ENCODE measurements at regions of chr11 and their contacts with region 1.

Region 1: DNA sequence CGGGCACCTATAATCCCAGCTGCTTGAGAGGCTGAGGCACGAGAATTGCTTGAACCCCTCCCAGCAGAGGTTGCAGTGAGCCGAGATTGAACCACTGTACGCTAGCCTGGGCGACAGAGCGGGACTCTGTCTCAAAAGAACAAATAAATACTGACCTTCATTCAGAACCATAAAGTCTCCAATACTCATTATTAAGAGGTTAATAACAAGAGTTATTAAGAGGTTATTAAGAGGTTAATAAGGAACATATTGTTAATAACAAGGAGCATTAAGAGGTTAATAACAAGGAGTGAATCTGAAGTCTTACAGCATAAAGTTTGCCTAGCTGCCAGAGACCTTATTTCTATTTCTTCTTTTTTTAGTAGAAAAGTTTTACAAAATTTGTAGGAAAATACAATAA is 7.6 kb downstream of the CELF1 start:
- DNase-seq: no peak
- ATAC-seq: no peak
- H3K4me3 ChIP-seq: no peak overlapping the region
- H3K27ac ChIP-seq: no peak overlapping the region
- H3K4me1 ChIP-seq: peaks cover 0 to 3% of the 10 kb centered on the region in 2 donors
- H3K27me3 ChIP-seq: no peaks in the 10 kb centered on the region

Region 2: DNA sequence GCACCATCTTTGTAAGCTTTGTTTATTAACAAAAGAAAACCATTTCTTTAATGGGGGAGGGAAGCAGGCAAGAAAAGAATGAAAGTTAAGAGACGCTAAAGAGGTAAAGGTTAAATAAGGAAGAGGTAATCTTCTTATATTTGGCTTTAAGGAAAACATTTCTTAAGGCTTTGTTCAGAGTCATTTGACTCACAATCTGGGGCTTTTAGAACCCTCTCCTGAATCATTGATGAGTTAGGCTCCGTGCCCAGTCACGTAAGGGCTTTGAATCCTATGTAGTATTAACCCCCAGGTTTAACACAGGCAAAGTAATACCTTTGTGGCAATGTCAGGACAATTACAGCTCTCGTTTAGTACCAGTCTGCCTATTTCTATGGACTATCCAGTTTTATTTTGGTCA is 249.3 kb before region 1 on chr11:
- intact Hi-C with region 1: no loop called
- DNase-seq: no peak
- ATAC-seq: no peak
- H3K4me3 ChIP-seq: no peak overlapping the region
- H3K27ac ChIP-seq: no peak overlapping the region
- H3K4me1 ChIP-seq: no peaks in the 10 kb centered on the region
- H3K27me3 ChIP-seq: no peaks in the 10 kb centered on the region

Region 3: GRCh38 chr11:47411884-47412746 is 133.2 kb before region 1 on chr11:
- intact Hi-C with region 1: no loop called
- DNase-seq: peak; percentile 74 to 86
- ATAC-seq: no peak
- H3K4me3 ChIP-seq: no peak overlapping the region
- H3K27ac ChIP-seq: no peak overlapping the region
- H3K4me1 ChIP-seq: no peaks in the 10 kb centered on the region
- H3K27me3 ChIP-seq: no peaks in the 10 kb centered on the region

Region 4: GRCh38 chr11:47514825-47515647 is 30.3 kb before region 1 on chr11:
- intact Hi-C with region 1: loop called in 1 of 2 experiments (anchors 5 kb)
- DNase-seq: no peak
- ATAC-seq: no peak
- H3K4me3 ChIP-seq: no peak overlapping the region
- H3K27ac ChIP-seq: peak overlapping the region; percentile 12 to 27
- H3K4me1 ChIP-seq: peaks cover 5 to 19% of the 10 kb centered on the region in 2 donors
- H3K27me3 ChIP-seq: no peaks in the 10 kb centered on the region